Heart left ventricle (tissue), 16 donors: ENCODE measurements at regions of chr21 and their contacts with region 1.

Region 1: DNA sequence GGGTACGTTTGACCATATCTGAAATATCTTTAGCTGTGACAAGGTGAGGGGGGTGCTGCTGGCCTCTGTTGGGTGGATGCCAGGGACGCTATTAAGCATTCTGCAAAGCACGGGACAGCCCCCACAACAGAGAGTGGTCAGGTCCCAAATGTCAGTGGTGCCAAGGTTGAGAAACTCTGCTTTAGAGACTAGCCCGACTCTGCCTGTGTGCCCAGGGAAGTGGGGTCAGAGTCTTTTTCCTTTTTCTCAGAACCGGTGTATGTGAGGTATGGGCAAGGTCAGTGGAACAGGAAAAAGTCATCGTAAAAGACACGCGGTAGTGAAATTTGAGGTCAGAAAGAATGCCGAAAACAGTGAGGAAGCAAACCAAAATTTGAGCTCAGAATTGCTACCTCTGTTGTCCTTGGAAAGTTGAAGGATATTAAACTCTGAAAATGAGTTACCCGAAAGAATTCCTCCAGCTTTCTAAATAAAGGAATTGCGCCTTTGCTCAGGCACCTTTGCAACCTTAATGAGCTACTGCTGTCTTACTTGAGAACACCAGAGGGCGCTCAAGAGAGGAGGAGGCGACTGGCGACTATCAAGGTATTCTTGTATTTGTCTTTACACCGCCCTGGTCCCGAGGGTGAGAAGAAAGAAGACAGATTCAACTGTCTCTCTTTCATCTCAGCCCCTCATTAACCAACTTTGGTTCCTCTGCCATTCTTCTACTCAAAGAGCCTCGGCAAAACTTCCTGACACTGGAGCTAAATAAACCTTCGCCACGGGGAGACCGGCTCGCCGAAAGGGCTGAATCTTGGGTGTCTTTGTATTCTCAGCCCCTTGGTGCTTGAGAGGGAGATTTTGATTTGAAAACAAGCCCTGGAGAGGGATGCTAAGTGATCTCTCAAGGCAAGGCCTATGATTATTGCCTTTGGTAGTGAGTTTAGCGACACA is 85.4 kb upstream of the OLIG2 start:
- DNase-seq: peak in 3 of 5 donors; percentile 27 to 35 (median 32)
- ATAC-seq: peak in 1 of 4 donors; percentile 70
- H3K4me3 ChIP-seq: no peak overlapping the region
- H3K27ac ChIP-seq: no peak overlapping the region
- H3K4me1 ChIP-seq: no peaks in the 10 kb centered on the region
- H3K27me3 ChIP-seq: peaks cover 0 to 3% (median 0%) of the 10 kb centered on the region in 9 donors
- CTCF ChIP-seq: peak; percentile 64 to 84 (median 76)
- POLR2A ChIP-seq: no peak

Region 2: DNA sequence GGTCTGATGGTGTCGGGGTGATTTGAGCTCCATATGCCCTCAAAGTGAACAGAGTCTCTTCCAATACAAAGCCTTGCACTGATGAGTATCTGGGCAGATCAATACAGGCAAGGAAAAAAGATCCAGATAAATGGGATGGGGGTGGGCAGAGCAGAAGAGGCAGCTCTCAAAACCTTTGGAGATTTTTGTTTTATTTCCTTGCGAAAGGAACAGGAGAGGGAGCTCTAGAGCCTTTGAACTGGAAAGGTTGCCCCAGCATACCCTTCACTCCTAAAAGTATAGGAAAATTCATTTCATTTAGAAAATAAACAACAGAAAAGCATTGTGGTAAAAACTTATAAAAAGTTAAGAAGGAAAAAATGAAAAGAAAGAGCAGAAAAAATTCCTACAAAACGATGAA is 54.0 kb after region 1 on chr21:
- intact Hi-C with region 1: no loop called
- DNase-seq: no peak
- ATAC-seq: no peak
- H3K4me3 ChIP-seq: no peak overlapping the region
- H3K27ac ChIP-seq: no peak overlapping the region
- H3K4me1 ChIP-seq: no peaks in the 10 kb centered on the region
- H3K27me3 ChIP-seq: peaks cover 0 to 33% (median 2%) of the 10 kb centered on the region in 9 donors
- CTCF ChIP-seq: peak in 9 of 12 donors; percentile 24 to 46 (median 38)
- POLR2A ChIP-seq: no peak

Region 3: DNA sequence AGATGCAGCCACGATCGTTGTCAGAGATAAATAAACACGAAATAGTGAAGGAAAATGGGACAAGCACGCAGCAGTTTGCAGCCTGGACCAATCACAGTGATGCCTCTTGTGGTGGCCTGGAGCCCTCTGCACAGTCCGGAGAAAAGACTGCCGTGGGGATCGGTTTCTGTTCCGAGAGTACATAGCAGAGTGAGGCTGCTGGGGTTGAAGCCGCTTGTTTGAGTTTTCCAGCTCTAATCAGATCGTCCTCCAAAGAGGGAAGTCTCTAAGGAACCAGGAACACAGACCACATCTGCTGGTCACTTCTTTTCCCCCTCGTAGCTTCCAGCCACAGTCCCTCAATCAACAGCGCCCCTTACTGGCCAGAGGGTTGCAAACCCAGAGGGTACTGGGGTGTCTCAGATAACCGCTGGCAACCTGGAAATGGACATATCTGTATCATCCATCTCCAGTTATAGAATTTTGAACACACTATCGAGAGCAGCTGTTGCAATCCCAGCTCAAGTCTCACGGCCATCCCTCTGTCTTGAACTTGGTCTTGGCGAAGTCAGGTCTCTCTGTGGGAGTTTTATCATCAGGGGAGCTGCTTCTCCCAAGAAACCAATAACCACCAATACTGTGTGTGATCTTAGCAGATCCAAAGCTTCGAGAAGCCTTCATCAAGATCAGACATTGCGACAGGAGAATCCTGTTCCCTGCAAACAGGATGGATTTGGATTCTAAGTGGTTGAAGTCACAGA is 187.0 kb after region 1 on chr21:
- intact Hi-C with region 1: loop called (anchors 1 to 10 kb)
- DNase-seq: peak; percentile 53 to 77 (median 67)
- ATAC-seq: peak; percentile 64 to 91 (median 90)
- H3K4me3 ChIP-seq: peak overlapping the region in 10 of 12 donors; percentile 12 to 52 (median 40)
- H3K27ac ChIP-seq: no peak overlapping the region
- H3K4me1 ChIP-seq: peaks cover 0 to 9% (median 2%) of the 10 kb centered on the region in 12 donors
- H3K27me3 ChIP-seq: peaks cover 0 to 39% (median 9%) of the 10 kb centered on the region in 9 donors
- CTCF ChIP-seq: peak; percentile 46 to 81 (median 70)
- POLR2A ChIP-seq: no peak

Region 4: DNA sequence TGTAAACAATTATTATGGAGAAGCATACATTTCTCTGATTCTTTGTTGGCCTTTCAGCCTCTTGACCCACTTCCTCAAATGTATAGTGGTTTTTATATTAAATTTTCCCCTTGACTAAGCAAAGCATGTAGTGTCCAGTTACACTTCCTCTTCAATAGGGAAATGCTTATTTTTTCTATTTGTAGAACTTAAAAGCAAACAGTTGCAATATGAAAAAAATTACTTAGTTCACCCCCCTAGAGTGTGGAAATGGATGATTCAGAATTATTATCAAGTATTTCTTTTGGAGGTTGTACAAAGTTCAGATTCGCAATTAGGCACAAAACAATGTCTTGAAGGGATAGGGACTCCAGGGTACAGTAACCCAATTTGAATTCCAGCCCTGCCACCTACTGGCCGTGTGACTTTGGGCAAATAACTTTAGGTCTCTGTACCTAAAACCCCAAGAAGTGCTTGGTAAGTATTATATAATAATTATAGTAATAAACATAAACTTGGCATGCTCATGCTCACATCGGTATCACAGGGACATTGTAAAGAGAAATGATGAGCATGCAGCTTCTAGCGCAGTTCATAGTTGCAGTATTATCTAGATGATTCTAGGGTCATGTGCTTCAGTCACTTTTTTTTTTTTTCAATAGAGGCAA is 434.2 kb after region 1 on chr21:
- intact Hi-C with region 1: loop called in 3 of 10 experiments (anchors 5 to 10 kb)
- DNase-seq: peak in 3 of 5 donors; percentile 54 to 58 (median 57)
- ATAC-seq: peak; percentile 70 to 78 (median 75)
- H3K4me3 ChIP-seq: no peak overlapping the region
- H3K27ac ChIP-seq: peak overlapping the region in 5 of 12 donors; percentile 11 to 91 (median 34)
- H3K4me1 ChIP-seq: peaks cover 0 to 50% (median 5%) of the 10 kb centered on the region in 12 donors
- H3K27me3 ChIP-seq: no peaks in the 10 kb centered on the region
- CTCF ChIP-seq: peak; percentile 41 to 80 (median 67)
- POLR2A ChIP-seq: no peak